CD4-positive, alpha-beta memory T cell (primary cell): ENCODE measurements at regions of chr10 and their contacts with region 1.

Region 1: GRCh38 chr10:103457176-103457712 is 1.5 kb downstream of the CALHM1 start:
- DNase-seq: no peak
- H3K4me3 ChIP-seq: no peak overlapping the region
- H3K4me3 Mint-ChIP-seq: peak overlapping the region in 1 of 8 donors; percentile 20
- H3K27ac ChIP-seq: no peak overlapping the region
- H3K27ac Mint-ChIP-seq: peak overlapping the region in 2 of 7 donors; percentile 53 to 86
- H3K4me1 ChIP-seq: peaks cover 15% of the 10 kb centered on the region
- H3K4me1 Mint-ChIP-seq: peaks cover 19 to 37% (median 24%) of the 10 kb centered on the region in 4 donors
- H3K27me3 ChIP-seq: no peaks in the 10 kb centered on the region
- H3K27me3 Mint-ChIP-seq: no peaks in the 10 kb centered on the region

Region 2: DNA sequence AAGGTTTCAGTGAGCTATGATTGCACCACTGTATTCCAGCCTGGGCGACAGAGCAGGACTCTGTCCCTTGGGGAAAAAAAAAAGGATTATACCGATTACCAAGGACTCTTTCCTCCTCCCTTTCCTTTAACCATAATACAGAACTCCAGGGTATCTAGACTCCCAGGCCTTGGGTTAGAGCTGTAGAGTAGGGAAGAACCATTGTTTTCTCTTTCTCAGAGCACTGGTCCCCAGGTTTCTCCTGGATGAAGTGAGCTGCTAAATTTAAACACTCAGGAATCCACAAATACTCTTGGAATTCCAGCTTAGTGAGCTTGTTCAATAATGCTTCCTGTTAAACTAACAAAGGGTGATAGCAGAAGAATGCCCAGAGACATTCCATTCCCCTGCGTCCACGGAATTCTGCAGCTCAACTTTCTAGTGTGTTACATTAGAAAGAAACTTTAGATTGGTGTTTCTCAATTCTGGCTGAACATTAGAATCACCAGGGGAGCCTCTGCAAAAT is 226.1 kb before region 1 on chr10:
- CTCF ChIA-PET with region 1: no interaction called
- POLR2A ChIA-PET with region 1: no interaction called
- intact Hi-C with region 1: no loop called
- DNase-seq: no peak
- H3K4me3 ChIP-seq: no peak overlapping the region
- H3K4me3 Mint-ChIP-seq: no peak overlapping the region
- H3K27ac ChIP-seq: no peak overlapping the region
- H3K27ac Mint-ChIP-seq: no peak overlapping the region
- H3K4me1 ChIP-seq: no peaks in the 10 kb centered on the region
- H3K4me1 Mint-ChIP-seq: no peaks in the 10 kb centered on the region
- H3K27me3 ChIP-seq: no peaks in the 10 kb centered on the region
- H3K27me3 Mint-ChIP-seq: peaks cover 1 to 3% of the 10 kb centered on the region in 2 donors

Region 3: DNA sequence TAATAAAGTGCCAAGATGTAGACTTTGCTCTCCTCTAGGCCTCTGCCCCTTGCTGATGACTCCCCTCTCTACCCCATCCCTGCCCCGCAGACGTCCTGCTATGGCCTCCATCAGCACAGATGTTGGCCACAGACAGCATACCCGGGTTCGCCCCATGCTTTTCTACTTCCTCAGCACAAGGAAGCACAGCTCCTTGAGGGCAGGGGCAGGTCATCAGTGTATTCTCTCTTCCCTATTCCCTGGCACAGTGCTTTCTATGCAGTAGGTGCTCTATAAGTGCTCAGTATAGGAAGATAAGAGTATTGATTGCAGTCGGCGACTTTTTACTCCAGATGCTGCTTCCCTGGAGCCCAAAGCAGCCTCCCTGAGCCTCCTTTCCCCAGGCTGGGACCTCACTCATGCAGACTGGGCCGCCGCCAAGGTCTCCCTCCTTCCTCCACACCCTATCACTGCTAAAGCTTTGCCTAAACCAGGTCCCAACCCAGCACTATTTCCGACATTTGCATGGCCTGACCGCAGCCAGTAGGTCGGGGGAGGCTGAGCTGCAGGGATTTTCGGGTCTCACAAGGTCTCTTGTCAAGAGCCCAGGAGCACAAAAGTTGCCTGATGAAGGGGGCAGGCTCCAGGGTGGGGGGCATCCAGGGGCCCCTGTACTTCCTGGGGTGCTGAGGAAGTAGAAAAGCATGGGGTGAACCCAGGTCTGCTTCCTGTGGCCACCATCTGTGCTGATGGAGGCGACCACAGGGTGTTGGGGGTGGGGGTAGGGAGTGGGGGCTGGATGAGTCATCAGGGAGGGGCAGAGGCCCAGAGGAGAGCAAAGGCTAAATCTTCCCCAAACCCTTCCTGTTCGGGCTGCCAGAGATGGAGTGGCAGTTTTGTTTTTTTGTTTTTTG is 13.8 kb after region 1 on chr10:
- CTCF ChIA-PET with region 1: interaction called, 28 read pairs
- POLR2A ChIA-PET with region 1: interaction called, 106 read pairs
- intact Hi-C with region 1: no loop called
- DNase-seq: peak; percentile 67 to 88 (median 74)
- H3K4me3 ChIP-seq: peak overlapping the region in 1 of 2 donors; percentile 3
- H3K4me3 Mint-ChIP-seq: peak overlapping the region; percentile 67 to 85 (median 79)
- H3K27ac ChIP-seq: peak overlapping the region; percentile 63
- H3K27ac Mint-ChIP-seq: peak overlapping the region; percentile 85 to 97 (median 90)
- H3K4me1 ChIP-seq: peaks cover 43% of the 10 kb centered on the region
- H3K4me1 Mint-ChIP-seq: peaks cover 30 to 69% (median 51%) of the 10 kb centered on the region in 4 donors
- H3K27me3 ChIP-seq: no peaks in the 10 kb centered on the region
- H3K27me3 Mint-ChIP-seq: no peaks in the 10 kb centered on the region

Region 4: DNA sequence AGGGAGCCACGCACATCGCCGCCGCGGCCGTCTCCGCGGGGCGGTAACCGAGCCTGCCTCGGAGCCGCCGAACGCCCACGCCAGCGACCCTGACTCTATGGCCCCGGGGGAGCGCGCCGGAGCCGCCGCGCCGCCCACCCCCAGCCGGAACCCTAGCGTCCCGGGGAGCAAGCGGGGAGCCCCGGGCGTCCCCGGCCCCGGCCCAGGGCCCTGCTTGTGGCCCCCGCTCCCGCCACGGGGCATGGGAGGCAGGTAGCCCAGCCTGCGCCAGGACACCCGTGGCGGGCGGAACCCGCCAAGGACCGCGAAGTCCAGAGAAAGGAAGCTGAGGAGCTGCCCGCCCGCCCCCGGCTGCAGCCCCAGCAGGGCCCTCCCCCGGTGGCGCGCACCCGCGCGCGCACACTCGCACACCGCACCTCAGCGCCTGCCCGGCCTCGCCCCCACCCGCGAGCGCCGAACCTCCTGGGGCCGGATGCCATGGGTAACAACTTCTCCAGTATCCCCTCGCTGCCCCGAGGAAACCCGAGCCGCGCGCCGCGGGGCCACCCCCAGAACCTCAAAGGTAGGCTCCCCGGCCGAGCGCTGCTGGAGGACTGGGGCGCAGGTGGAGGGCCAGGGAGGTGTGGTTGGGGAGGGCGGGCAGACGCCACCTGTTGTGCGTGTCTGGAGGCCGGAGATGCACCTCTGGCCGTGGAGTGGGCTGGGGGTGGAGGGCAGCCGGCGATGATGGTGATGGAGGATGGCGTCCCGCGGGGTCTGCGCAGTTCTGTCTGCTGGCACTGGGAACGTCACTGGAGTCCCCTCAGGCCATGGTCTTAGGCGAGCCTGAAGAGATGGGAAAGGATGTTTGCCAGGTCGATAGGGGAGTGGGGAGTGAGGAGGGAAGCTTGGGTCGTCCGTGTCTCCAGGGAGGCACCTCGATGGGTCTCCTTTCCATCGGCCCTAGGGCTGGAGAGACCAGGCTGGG is 37.0 kb after region 1 on chr10:
- CTCF ChIA-PET with region 1: no interaction called
- POLR2A ChIA-PET with region 1: no interaction called
- intact Hi-C with region 1: no loop called
- DNase-seq: peak in 4 of 5 donors; percentile 16 to 48 (median 30)
- H3K4me3 ChIP-seq: peak overlapping the region in 1 of 2 donors; percentile 32
- H3K4me3 Mint-ChIP-seq: peak overlapping the region; percentile 61 to 80 (median 76)
- H3K27ac ChIP-seq: no peak overlapping the region
- H3K27ac Mint-ChIP-seq: no peak overlapping the region
- H3K4me1 ChIP-seq: peaks cover 21% of the 10 kb centered on the region
- H3K4me1 Mint-ChIP-seq: peaks cover 6 to 36% (median 20%) of the 10 kb centered on the region in 4 donors
- H3K27me3 ChIP-seq: peaks cover 19% of the 10 kb centered on the region
- H3K27me3 Mint-ChIP-seq: peaks cover 22 to 27% of the 10 kb centered on the region in 2 donors

Region 5: GRCh38 chr10:103699611-103700435 is 242.6 kb after region 1 on chr10:
- CTCF ChIA-PET with region 1: no interaction called
- POLR2A ChIA-PET with region 1: no interaction called
- intact Hi-C with region 1: no loop called
- DNase-seq: no peak
- H3K4me3 ChIP-seq: no peak overlapping the region
- H3K4me3 Mint-ChIP-seq: no peak overlapping the region
- H3K27ac ChIP-seq: no peak overlapping the region
- H3K27ac Mint-ChIP-seq: no peak overlapping the region
- H3K4me1 ChIP-seq: peaks cover 24% of the 10 kb centered on the region
- H3K4me1 Mint-ChIP-seq: peaks cover 5 to 27% (median 11%) of the 10 kb centered on the region in 4 donors
- H3K27me3 ChIP-seq: no peaks in the 10 kb centered on the region
- H3K27me3 Mint-ChIP-seq: no peaks in the 10 kb centered on the region